ENCODE measurements at regions of chr18 and their contacts with region 1.

Region 1: DNA sequence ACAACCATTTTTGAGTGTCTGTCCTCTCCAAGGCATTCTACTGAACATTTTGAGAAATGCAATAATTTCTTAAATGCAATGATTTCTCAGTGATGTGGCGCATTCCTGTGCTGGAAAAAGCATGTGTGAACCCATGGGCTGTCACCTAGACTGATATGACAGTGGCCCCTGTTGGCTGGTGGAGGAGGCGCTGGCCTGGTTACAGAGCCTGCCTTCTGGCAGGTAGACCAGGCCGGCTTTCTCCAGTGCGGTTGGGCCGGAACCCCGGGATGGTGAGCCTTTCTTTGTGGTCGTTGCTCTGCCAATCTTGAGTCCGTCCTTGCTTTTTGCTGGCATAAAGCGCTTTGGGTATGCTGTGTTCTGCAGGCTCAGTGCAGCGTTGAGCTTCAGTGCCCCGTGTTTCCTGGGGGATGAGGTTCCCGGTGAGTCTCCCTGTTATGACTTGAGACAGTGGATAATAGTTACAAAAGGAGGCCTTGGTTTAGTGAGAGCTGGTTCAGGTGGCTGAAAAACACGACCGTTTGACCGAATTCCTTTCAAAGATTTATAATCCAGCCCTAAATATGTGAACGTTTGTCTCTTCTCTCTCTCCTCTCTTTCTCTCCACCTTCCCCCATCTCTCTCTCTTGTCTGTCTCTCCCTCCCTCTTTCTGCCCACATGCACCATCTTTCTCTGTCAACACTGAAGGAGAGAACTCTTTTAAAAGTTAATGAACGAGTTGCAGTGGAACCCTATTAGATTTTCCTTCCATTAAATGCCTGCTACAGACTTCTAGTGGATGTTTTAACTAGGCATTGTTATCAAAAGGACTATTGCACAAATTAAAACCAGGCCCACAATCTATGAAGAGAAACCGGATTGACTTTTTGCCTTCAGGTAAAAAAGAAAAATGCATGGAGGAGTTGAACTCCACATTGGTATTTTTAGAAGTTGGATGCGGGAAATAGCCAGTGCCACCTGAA is 34.0 kb downstream of the TSHZ1 start:
- DNase-seq: peak; percentile 7 to 53
- H3K4me3 ChIP-seq: no peak overlapping the region
- H3K27ac ChIP-seq: no peak overlapping the region
- H3K4me1 ChIP-seq: no peaks in the 10 kb centered on the region; a peak in 1 of 7 replicates
- H3K27me3 ChIP-seq: no peaks in the 10 kb centered on the region
- CTCF ChIP-seq: peak; percentile 58 to 73 (median 67)
- EP300 ChIP-seq: no peak
- POLR2A ChIP-seq: no peak
- RAD21 ChIP-seq: peak; percentile 68 to 77

Region 2: GRCh38 chr18:75231053-75231406 is 13.6 kb before region 1 on chr18:
- CTCF ChIA-PET with region 1: interaction called, 17 read pairs
- POLR2A ChIA-PET with region 1: no interaction called
- DNase-seq: no peak
- H3K4me3 ChIP-seq: no peak overlapping the region
- H3K27ac ChIP-seq: no peak overlapping the region
- H3K4me1 ChIP-seq: no peaks in the 10 kb centered on the region
- H3K27me3 ChIP-seq: no peaks in the 10 kb centered on the region
- CTCF ChIP-seq: no peak
- EP300 ChIP-seq: no peak
- POLR2A ChIP-seq: no peak
- RAD21 ChIP-seq: no peak